GM10248 (cell line): ENCODE measurements at regions of chr1 and their contacts with region 1.

Region 1: GRCh38 chr1:206080026-206080820 is 27.2 kb downstream of the RHEX start:
- DNase-seq: no peak
- CTCF ChIP-seq: no peak

Region 2: DNA sequence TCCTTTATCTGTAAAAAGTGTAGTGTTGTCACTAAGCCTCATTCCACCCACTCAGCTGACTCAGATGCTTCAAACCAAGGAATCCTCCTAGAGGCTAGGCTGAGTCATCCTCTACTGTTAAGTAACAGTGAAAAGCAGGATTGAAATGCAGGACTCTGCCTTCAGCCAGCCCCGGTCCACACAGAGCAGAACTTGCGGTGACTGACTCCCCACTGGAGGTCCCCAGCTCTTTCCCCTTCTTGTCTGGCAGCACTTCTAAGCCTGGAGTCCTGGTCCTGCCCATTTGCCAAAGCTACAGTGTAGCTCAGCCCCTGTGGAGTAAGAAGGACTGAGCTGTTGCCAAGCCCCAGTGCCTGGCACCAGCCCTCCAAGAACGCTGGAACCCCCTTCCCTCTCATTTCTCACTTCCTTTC is 78.7 kb before region 1 on chr1:
- CTCF ChIA-PET with region 1: no interaction called
- POLR2A ChIA-PET with region 1: no interaction called
- DNase-seq: no peak
- CTCF ChIP-seq: no peak

Region 3: DNA sequence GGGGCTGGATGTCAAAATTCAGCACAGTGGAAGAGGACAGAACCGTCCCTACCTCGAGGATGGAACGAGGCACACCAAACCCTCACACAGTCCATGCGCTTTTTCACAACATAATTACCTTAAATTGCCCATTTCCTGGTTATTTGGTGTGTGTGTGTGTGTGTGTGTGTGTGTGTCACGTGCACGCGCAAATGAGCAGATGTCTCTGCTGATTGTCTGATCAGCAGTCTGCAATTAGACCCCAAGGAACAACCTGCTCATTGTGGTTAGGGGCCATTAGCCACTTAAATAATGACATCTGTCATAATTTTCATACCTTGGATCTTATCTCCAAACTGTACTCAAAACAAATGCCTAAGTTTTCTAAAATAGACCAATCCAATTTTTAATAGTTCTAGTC is 13.8 kb after region 1 on chr1:
- CTCF ChIA-PET with region 1: interaction called, 16 read pairs
- POLR2A ChIA-PET with region 1: no interaction called
- DNase-seq: no peak
- CTCF ChIP-seq: no peak